K562 (cell line): ENCODE measurements at regions of chr9 and their contacts with region 1.

Region 1: GRCh38 chr9:116494815-116495634 is 192.1 kb upstream of the TRIM32 start:
- DNase-seq: peak; percentile 41 to 73 (median 56)
- ATAC-seq: peak; percentile 83
- H3K4me3 ChIP-seq: no peak overlapping the region
- H3K27ac ChIP-seq: no peak overlapping the region
- H3K4me1 ChIP-seq: peaks cover 0 to 6% of the 10 kb centered on the region in 2 experiments; a peak in 2 of 5 replicates
- H3K27me3 ChIP-seq: no peaks in the 10 kb centered on the region
- CTCF ChIP-seq: peak; percentile 69 to 87 (median 70)
- EP300 ChIP-seq: no peak; the same call in 1 of the 2 replicates
- POLR2A ChIP-seq: no peak
- RAD21 ChIP-seq: peak; percentile 56 to 81

Region 2: GRCh38 chr9:115591584-115591984 is 903.4 kb before region 1 on chr9:
- CTCF ChIA-PET with region 1: no interaction called
- POLR2A ChIA-PET with region 1: no interaction called
- in situ Hi-C with region 1: no loop called
- intact Hi-C with region 1: loop called (anchors 5 kb)
- DNase-seq: peak; percentile 9 to 52 (median 14)
- ATAC-seq: peak; percentile 83
- H3K4me3 ChIP-seq: no peak overlapping the region
- H3K27ac ChIP-seq: no peak overlapping the region; the same call in 2 of the 3 replicates
- H3K4me1 ChIP-seq: no peaks in the 10 kb centered on the region
- H3K27me3 ChIP-seq: no peaks in the 10 kb centered on the region
- CTCF ChIP-seq: peak; percentile 37 to 68 (median 53)
- EP300 ChIP-seq: no peak
- POLR2A ChIP-seq: no peak
- RAD21 ChIP-seq: peak; percentile 71 to 77

Region 3: GRCh38 chr9:116149844-116150243 is 345.2 kb before region 1 on chr9:
- CTCF ChIA-PET with region 1: interaction called, 4 read pairs
- POLR2A ChIA-PET with region 1: interaction called, 3 read pairs
- in situ Hi-C with region 1: loop called (anchors 10 kb)
- intact Hi-C with region 1: loop called (anchors 1 kb)
- DNase-seq: peak; percentile 32 to 51 (median 40)
- ATAC-seq: peak; percentile 88
- H3K4me3 ChIP-seq: no peak overlapping the region
- H3K27ac ChIP-seq: no peak overlapping the region
- H3K4me1 ChIP-seq: peaks cover 0 to 6% of the 10 kb centered on the region in 2 experiments; a peak in 1 of 5 replicates
- H3K27me3 ChIP-seq: peaks cover 3 to 5% of the 10 kb centered on the region in 2 experiments; a peak in 3 of 5 replicates
- CTCF ChIP-seq: peak; percentile 70 to 81 (median 71)
- EP300 ChIP-seq: no peak
- POLR2A ChIP-seq: no peak
- RAD21 ChIP-seq: peak; percentile 60 to 64

Region 4: GRCh38 chr9:116285320-116285719 is 209.7 kb before region 1 on chr9:
- CTCF ChIA-PET with region 1: interaction called, 3 read pairs
- POLR2A ChIA-PET with region 1: no interaction called
- in situ Hi-C with region 1: no loop called
- intact Hi-C with region 1: loop called (anchors 2 kb)
- DNase-seq: no peak
- ATAC-seq: peak; percentile 82
- H3K4me3 ChIP-seq: no peak overlapping the region
- H3K27ac ChIP-seq: no peak overlapping the region
- H3K4me1 ChIP-seq: no peaks in the 10 kb centered on the region
- H3K27me3 ChIP-seq: no peaks in the 10 kb centered on the region
- CTCF ChIP-seq: peak in 2 of 3 experiments; percentile 34 to 38; a peak in 2 of 6 replicates
- EP300 ChIP-seq: no peak
- POLR2A ChIP-seq: no peak
- RAD21 ChIP-seq: peak in 1 of 2 experiments; percentile 28; a peak in 2 of 4 replicates

Region 5: GRCh38 chr9:116572095-116572748 is 77.2 kb after region 1 on chr9:
- CTCF ChIA-PET with region 1: no interaction called
- POLR2A ChIA-PET with region 1: no interaction called
- in situ Hi-C with region 1: no loop called
- intact Hi-C with region 1: loop called (anchors 2 kb)
- DNase-seq: peak; percentile 83 to 93 (median 90)
- ATAC-seq: peak; percentile 99
- H3K4me3 ChIP-seq: no peak overlapping the region
- H3K27ac ChIP-seq: no peak overlapping the region
- H3K4me1 ChIP-seq: peaks cover 6 to 10% of the 10 kb centered on the region in 2 experiments; a peak in 2 of 5 replicates
- H3K27me3 ChIP-seq: no peaks in the 10 kb centered on the region
- CTCF ChIP-seq: peak; percentile 89 to 95 (median 94)
- EP300 ChIP-seq: 0 out of 2 replicates have a peak, but pooled peaks have one; percentile 10
- POLR2A ChIP-seq: no peak
- RAD21 ChIP-seq: peak; percentile 97